ENCODE measurements at regions of chr16 and their contacts with region 1.

Region 1: DNA sequence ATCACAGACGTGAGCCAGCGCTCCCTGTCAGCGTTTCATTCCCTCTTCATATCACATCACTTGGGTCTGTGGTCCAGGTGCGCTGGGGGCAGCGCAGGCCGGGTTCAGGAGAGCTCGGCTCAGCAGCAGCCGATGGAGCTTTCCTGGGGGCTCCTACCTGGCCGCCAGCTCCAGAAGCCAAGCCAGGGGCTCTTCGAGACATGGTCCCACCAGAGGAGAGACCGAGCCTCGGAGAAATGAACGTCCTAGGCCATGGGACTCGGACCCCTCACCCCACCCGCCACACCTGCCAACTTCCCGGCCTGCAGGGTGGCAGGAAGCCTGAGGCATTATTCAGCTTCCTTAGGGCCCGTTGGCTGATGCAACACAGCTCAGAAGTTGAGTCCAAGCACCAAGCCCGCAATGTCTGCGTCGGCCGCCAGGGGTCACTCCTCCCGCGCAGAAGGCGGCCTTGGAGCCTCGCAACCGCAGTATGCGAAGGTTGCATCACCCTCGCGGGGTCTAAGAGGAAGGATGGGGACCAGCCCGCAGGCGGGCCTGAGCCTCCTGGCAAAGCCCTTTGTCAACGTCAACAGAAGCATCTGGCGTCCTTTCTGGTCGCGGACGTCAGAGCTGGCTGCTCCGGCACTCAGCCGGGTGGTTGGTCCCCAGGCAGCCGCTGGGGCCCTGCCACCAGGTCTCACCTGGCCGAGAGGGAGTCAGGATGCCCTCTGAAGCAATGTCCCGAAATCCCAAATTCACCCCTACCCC is 13.2 kb upstream of the KLHDC4 start:
- DNase-seq: peak; percentile 92
- H3K4me3 ChIP-seq: no peak overlapping the region
- H3K27ac ChIP-seq: no peak overlapping the region
- H3K4me1 ChIP-seq: no peaks in the 10 kb centered on the region
- H3K27me3 ChIP-seq: no peaks in the 10 kb centered on the region
- CTCF ChIP-seq: peak; percentile 99

Region 2: GRCh38 chr16:87586201-87586782 is 192.7 kb before region 1 on chr16:
- intact Hi-C with region 1: loop called (anchors 5 kb)
- DNase-seq: no peak
- H3K4me3 ChIP-seq: no peak overlapping the region
- H3K27ac ChIP-seq: no peak overlapping the region
- H3K4me1 ChIP-seq: no peaks in the 10 kb centered on the region
- H3K27me3 ChIP-seq: no peaks in the 10 kb centered on the region
- CTCF ChIP-seq: no peak

Region 3: GRCh38 chr16:87874639-87875465 is 95.8 kb after region 1 on chr16:
- intact Hi-C with region 1: loop called (anchors 2 kb)
- DNase-seq: no peak
- H3K4me3 ChIP-seq: no peak overlapping the region
- H3K27ac ChIP-seq: no peak overlapping the region
- H3K4me1 ChIP-seq: no peaks in the 10 kb centered on the region
- H3K27me3 ChIP-seq: no peaks in the 10 kb centered on the region
- CTCF ChIP-seq: no peak

Region 4: DNA sequence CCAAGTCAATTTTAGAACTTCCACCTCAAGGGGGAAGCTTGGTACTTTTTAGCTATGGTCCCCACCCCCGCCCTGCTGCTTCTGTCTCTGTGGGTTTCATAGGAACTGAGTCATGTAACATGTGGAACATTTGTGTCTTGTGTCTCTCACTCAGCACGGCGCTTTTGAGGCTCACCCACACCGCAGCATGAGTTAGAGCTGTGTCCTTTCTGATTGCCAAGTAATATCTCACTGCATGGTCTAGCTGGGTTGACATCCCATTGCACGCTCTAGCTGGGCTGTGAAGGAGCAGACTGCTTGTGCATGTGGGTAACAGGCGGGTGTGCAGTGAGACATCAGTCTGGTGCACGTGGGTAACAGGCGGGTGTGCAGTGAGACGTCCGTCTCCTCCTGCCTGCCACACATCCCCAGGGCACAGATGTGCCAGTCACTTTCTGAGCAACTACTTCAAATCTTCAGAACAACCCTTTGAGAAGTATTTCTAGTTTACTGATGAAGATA is 116.7 kb after region 1 on chr16:
- intact Hi-C with region 1: loop called (anchors 10 kb)
- DNase-seq: no peak
- H3K4me3 ChIP-seq: no peak overlapping the region
- H3K27ac ChIP-seq: no peak overlapping the region
- H3K4me1 ChIP-seq: no peaks in the 10 kb centered on the region
- H3K27me3 ChIP-seq: no peaks in the 10 kb centered on the region
- CTCF ChIP-seq: no peak

Measured in colonic mucosa (tissue), 4 donors.